Aorta (tissue), 5 donors: ENCODE measurements at regions of chr13 and their contacts with region 1.

Region 1: GRCh38 chr13:30132623-30133553 is 174.5 kb downstream of the KATNAL1 start:
- DNase-seq: peak; percentile 98 to 100
- ATAC-seq: peak; percentile 94
- H3K4me3 ChIP-seq: no peak overlapping the region
- H3K27ac ChIP-seq: no peak overlapping the region
- H3K4me1 ChIP-seq: no peaks in the 10 kb centered on the region
- H3K27me3 ChIP-seq: no peaks in the 10 kb centered on the region

Region 2: DNA sequence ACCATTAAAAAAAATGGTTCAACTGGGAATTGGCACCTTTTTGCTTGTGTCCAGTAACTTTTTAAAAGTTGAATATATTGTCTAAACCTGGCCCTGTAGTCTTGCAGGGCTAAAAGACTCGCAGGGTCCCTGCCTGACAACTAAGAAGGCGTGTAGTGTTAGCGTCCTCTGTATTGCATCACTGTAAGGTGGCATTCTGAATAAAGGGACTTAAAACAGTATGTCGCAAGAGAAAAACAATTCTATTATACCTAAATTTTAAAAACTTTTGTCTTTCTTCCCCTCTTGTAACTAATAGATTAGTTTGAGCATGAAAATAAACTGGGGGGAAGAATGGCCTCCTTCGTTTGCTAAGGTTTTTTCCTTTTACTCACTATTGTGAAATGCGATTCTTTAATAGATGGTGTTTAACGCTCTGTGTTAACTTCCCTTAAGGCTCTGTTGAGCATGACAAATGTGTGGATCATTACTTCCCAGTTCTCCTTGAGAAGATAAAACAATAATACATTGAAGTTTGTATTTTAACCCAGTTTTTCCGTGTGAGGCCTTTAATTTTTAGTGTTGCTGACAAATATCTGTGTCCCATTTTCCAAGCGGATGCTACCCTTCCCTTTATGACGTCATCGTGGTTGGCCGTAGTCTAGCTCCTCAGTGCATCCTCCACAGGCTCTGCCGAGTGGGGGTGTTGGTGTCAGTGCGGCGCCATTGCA is 39.9 kb after region 1 on chr13:
- intact Hi-C with region 1: no loop called
- DNase-seq: no peak
- ATAC-seq: no peak
- H3K4me3 ChIP-seq: no peak overlapping the region
- H3K27ac ChIP-seq: no peak overlapping the region
- H3K4me1 ChIP-seq: no peaks in the 10 kb centered on the region
- H3K27me3 ChIP-seq: no peaks in the 10 kb centered on the region

Region 3: GRCh38 chr13:30408319-30409101 is 275.6 kb after region 1 on chr13:
- intact Hi-C with region 1: loop called (anchors 5 to 10 kb)
- DNase-seq: peak; percentile 96 to 99
- ATAC-seq: peak; percentile 94
- H3K4me3 ChIP-seq: no peak overlapping the region
- H3K27ac ChIP-seq: peak overlapping the region; percentile 84 to 85
- H3K4me1 ChIP-seq: no peaks in the 10 kb centered on the region
- H3K27me3 ChIP-seq: no peaks in the 10 kb centered on the region